SK-N-SH (cell line): ENCODE measurements at regions of chr14 and their contacts with region 1.

Region 1: GRCh38 chr14:24160850-24161804 is at the start of gene IRF9:
- DNase-seq: peak; percentile 95
- H3K4me3 ChIP-seq: peak within 1 kb of the TSS; percentile 75 to 77
- H3K27ac ChIP-seq: peak within 1 kb of the TSS; percentile 67 to 96
- H3K4me1 ChIP-seq: peaks cover 4 to 22% of the 10 kb centered on the region in 2 experiments; a peak in 1 of 4 replicates
- H3K27me3 ChIP-seq: no peaks in the 10 kb centered on the region
- CTCF ChIP-seq: peak; percentile 95
- EP300 ChIP-seq: peak; percentile 18 to 62; a peak in 3 of 4 replicates
- RAD21 ChIP-seq: peak; percentile 76
- polyA plus RNA-seq, gene IRF9: 37.6 and 43.6 TPM in 2 replicates

Region 2: DNA sequence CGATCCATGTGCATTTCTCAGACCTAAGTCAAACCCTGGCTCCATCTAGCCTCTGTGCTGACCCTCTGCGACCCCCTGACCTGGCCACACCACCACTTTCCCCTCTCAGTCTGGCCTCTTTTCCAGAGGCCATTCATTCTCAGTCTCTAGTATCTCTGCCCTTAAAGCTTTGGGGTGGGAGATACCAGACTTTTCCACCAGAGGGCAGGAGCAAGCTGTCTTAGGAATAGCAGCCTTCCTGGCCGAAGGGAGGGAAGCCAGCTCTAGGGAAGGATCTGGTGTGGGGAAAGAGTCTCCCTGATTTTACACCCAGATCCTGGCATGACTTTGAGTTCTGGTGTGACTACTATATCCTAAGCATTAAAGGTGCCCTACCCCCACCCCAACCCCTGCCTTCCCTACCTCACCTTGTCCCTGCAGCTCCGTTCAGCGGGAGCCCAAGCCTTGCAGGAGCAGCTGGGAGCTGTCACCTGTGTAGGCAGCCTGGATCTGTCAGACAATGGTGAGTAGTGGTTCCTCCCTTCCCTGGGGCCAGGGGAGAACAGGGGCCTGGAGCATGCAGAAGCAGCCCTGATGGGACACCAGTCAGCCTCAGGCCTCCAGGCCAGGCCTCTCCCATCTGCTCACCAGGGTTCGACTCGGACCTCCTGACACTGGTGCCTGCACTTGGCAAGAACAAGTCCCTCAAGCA is 102.7 kb before region 1 on chr14:
- CTCF ChIA-PET with region 1: interaction called, 25 read pairs
- POLR2A ChIA-PET with region 1: no interaction called
- DNase-seq: peak; percentile 91
- H3K4me3 ChIP-seq: no peak overlapping the region; a peak in 1 of 4 replicates
- H3K27ac ChIP-seq: no peak overlapping the region
- H3K4me1 ChIP-seq: peaks cover 0 to 3% of the 10 kb centered on the region in 2 experiments; a peak in 1 of 4 replicates
- H3K27me3 ChIP-seq: no peaks in the 10 kb centered on the region
- CTCF ChIP-seq: peak; percentile 84
- EP300 ChIP-seq: no peak
- RAD21 ChIP-seq: peak; percentile 99

Region 3: DNA sequence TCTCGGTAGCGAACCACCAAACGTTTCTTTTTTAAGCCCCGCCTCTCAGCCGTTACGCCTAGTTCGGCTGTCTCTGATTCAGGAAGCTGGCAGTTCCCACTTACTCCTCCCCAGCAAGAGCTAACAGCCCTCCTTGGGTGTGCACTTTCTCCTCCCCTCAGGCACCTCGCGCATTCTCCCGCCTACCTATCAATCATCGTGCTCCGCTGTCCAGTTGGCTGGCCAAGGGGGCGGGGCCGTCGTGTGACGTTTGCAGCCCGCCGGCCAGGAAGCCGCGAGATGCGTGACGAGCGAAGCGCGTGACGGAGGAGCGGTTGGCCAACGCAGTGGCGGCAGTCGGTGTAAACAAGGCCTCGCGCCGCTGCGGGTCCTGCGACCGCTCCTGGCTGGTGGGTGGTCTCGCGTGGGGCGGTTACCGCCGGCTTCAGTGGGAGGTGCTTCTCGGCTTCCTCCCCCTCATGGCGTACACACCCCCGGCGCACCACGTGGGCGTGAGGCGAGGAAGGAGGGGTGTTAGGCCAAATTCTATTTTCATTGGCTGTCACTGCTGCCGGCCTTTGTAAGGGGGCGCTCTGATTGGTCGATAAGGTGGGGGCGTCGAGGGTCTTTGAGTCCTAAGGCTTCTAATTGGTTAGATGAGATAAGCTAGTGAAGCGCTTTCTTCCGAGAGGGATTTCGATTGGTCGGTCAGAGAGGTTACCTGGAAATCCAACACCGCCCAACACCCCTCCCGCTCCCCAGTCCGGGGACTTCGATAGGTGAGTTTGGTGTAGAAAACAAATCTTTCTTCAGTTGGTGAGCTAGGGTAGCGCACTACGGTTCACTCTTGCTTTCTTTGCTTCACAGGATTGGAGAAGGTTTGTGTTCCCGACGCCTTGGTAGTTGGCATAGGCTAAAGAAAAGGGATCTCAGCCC is 46.3 kb before region 1 on chr14 and contains the starts of genes DCAF11 and NRL:
- CTCF ChIA-PET with region 1: interaction called, 16 read pairs
- POLR2A ChIA-PET with region 1: interaction called, 11 read pairs
- DNase-seq: peak; percentile 95
- H3K4me3 ChIP-seq: peak within 1 kb of the TSS; percentile 71 to 88
- H3K27ac ChIP-seq: peak within 1 kb of the TSS; percentile 97 to 99
- H3K4me1 ChIP-seq: peaks cover 10 to 17% of the 10 kb centered on the region in 2 experiments
- H3K27me3 ChIP-seq: no peaks in the 10 kb centered on the region
- CTCF ChIP-seq: no peak
- EP300 ChIP-seq: peak in 1 of 2 experiments; percentile 25; a peak in 1 of 4 replicates
- RAD21 ChIP-seq: no peak
- polyA plus RNA-seq, gene DCAF11: 34.6 and 36.7 TPM in 2 replicates
- polyA plus RNA-seq, gene NRL: 0.76 and 0.88 TPM in 2 replicates

Region 4: DNA sequence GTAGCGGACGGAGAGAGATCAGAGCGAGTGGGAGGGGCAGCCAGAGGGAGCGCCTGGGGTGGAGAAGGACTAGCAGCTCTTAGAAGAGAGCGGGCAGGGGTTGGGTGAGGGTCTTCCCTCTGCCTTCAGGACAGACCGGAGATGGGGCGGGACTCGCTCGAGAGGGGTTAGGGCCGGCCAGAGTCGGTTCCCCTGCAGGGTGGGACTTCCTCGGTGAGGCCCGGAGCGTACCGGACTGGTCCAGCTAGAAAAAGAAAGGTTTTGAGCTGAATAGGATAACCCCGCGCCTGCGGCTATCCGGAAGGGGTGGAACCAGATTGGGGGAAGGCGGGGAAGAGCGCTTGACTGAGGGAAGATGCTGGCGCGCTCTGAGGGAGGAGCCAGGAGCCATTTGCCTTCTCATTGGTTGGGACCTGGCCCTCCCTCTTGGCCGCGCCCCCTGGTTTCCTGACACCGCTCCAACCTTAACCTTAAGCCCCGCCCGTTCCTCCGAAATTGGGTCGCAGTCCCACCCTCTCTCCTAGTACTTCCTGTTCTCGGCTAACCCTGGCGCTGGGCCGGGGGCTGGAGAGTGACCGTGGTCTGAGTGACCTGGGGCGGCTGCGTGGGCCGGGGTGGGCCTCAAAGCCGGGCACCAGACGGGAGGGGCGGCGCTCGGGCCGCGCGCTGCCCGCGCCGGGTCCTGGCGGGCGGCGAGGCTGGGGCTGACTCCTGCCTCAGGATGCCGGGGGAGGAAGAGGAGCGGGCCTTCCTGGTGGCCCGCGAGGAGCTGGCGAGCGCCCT is 14.0 kb before region 1 on chr14 and contains the start of gene RNF31:
- CTCF ChIA-PET with region 1: interaction called, 38 read pairs
- POLR2A ChIA-PET with region 1: interaction called, 50 read pairs
- DNase-seq: peak; percentile 96
- H3K4me3 ChIP-seq: peak within 1 kb of the TSS; percentile 93 to 98
- H3K27ac ChIP-seq: peak within 1 kb of the TSS; percentile 92 to 97
- H3K4me1 ChIP-seq: peaks cover 11 to 22% of the 10 kb centered on the region in 2 experiments
- H3K27me3 ChIP-seq: no peaks in the 10 kb centered on the region
- CTCF ChIP-seq: no peak
- EP300 ChIP-seq: no peak
- RAD21 ChIP-seq: no peak
- polyA plus RNA-seq, gene RNF31: 19.2 and 20.4 TPM in 2 replicates

Region 5: GRCh38 chr14:24179961-24180796 is 19.1 kb after region 1 on chr14:
- CTCF ChIA-PET with region 1: interaction called, 16 read pairs
- POLR2A ChIA-PET with region 1: interaction called, 10 read pairs
- DNase-seq: no peak
- H3K4me3 ChIP-seq: no peak overlapping the region
- H3K27ac ChIP-seq: peak overlapping the region; percentile 8 to 16; a peak in 2 of 4 replicates
- H3K4me1 ChIP-seq: peaks cover 0 to 12% of the 10 kb centered on the region in 2 experiments; a peak in 2 of 4 replicates
- H3K27me3 ChIP-seq: no peaks in the 10 kb centered on the region
- CTCF ChIP-seq: no peak
- EP300 ChIP-seq: no peak
- RAD21 ChIP-seq: no peak